Activated CD4-positive, alpha-beta T cell treated with anti-CD3 and anti-CD28 coated beads for 36 hours (primary cell): ENCODE measurements at regions of chr5 and their contacts with region 1.

Region 1: GRCh38 chr5:121968910-121969607 is 7.3 kb downstream of the SRFBP1 start:
- DNase-seq: no peak
- ATAC-seq: no peak
- H3K4me3 Mint-ChIP-seq: no peak overlapping the region
- H3K27ac Mint-ChIP-seq: no peak overlapping the region
- H3K4me1 Mint-ChIP-seq: peaks cover 39% of the 10 kb centered on the region
- H3K27me3 Mint-ChIP-seq: no peaks in the 10 kb centered on the region

Region 2: DNA sequence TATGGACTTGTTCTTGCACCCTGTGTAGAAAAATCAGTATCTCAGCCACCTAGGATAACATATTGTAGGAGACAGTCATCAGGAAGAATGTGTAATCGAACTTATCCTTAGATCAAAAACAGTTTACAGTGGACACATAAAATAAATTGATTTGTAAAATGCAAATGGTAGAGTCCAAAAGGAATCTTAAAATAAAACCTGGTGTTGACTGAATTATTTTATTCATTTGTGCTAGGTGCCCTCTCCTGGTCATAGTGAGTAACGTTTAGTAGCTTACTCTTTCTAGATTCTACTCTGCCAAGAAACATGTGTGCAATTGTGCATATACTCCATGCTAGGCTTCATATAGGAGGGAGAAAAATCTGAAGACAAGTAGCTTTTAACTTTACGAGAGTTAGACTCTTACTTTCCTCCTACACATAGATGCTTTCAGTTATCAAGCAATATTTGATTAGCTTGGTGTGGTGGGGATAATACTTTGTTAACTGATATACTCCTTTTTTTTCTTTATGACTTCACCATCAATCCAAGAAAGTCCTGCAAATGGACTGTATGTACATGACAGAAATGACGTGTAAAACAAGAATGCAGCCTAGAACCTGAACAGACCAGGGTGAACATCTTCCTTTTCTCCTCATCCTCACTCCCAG is 132.7 kb after region 1 on chr5:
- CTCF ChIA-PET with region 1: interaction called, 5 read pairs
- POLR2A ChIA-PET with region 1: no interaction called
- intact Hi-C with region 1: loop called (anchors 2 to 5 kb)
- DNase-seq: no peak
- ATAC-seq: no peak
- H3K4me3 Mint-ChIP-seq: no peak overlapping the region
- H3K27ac Mint-ChIP-seq: no peak overlapping the region
- H3K4me1 Mint-ChIP-seq: no peaks in the 10 kb centered on the region
- H3K27me3 Mint-ChIP-seq: peaks cover 2% of the 10 kb centered on the region

Region 3: GRCh38 chr5:122156724-122157325 is 187.8 kb after region 1 on chr5:
- CTCF ChIA-PET with region 1: no interaction called
- POLR2A ChIA-PET with region 1: interaction called, 3 read pairs
- intact Hi-C with region 1: loop called in 1 of 2 experiments (anchors 5 kb)
- DNase-seq: no peak
- ATAC-seq: peak; percentile 55
- H3K4me3 Mint-ChIP-seq: no peak overlapping the region
- H3K27ac Mint-ChIP-seq: no peak overlapping the region
- H3K4me1 Mint-ChIP-seq: peaks cover 11% of the 10 kb centered on the region
- H3K27me3 Mint-ChIP-seq: peaks cover 3% of the 10 kb centered on the region

Region 4: GRCh38 chr5:122182491-122182921 is 213.4 kb after region 1 on chr5:
- CTCF ChIA-PET with region 1: interaction called, 3 read pairs
- POLR2A ChIA-PET with region 1: no interaction called
- intact Hi-C with region 1: loop called in 1 of 2 experiments (anchors 10 kb)
- DNase-seq: no peak
- ATAC-seq: no peak
- H3K4me3 Mint-ChIP-seq: no peak overlapping the region
- H3K27ac Mint-ChIP-seq: no peak overlapping the region
- H3K4me1 Mint-ChIP-seq: peaks cover 22% of the 10 kb centered on the region
- H3K27me3 Mint-ChIP-seq: peaks cover 18% of the 10 kb centered on the region

Region 5: GRCh38 chr5:122322801-122323548 is 353.9 kb after region 1 on chr5:
- CTCF ChIA-PET with region 1: no interaction called
- POLR2A ChIA-PET with region 1: interaction called, 17 read pairs
- intact Hi-C with region 1: no loop called
- DNase-seq: no peak
- ATAC-seq: no peak
- H3K4me3 Mint-ChIP-seq: no peak overlapping the region
- H3K27ac Mint-ChIP-seq: no peak overlapping the region
- H3K4me1 Mint-ChIP-seq: no peaks in the 10 kb centered on the region
- H3K27me3 Mint-ChIP-seq: peaks cover 2% of the 10 kb centered on the region